Mammary epithelial cell (primary cell): ENCODE measurements at regions of chr22 and their contacts with region 1.

Region 1: DNA sequence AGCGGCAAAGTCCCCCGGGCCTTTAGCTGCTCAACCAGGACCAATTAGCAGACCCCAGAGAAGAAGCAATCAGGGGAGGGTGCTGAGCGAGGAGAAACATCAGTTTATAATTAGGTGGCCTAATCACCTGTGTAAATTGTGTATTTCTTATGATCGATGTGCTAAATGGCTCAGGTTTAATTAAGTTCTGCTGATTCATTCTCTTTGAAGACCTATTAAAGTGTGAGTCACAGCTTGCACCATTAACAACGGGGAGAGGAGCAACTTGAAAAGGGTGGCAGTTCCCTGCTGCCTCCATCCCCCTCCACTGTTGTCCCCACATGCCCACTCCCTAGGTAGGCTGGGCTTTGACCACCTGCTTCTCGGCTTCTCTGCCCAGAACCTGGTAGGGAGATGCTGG is 10.7 kb downstream of the ISX start:
- DNase-seq: peak; percentile 24
- H3K4me3 ChIP-seq: no peak overlapping the region
- H3K27ac ChIP-seq: no peak overlapping the region
- H3K4me1 ChIP-seq: no peaks in the 10 kb centered on the region
- H3K27me3 ChIP-seq: no peaks in the 10 kb centered on the region
- CTCF ChIP-seq: no peak

Region 2: GRCh38 chr22:35043252-35043931 is 33.2 kb before region 1 on chr22:
- CTCF ChIA-PET with region 1: no interaction called
- dilution Hi-C with region 1: no loop called
- in situ Hi-C with region 1: no loop called
- intact Hi-C with region 1: no loop called
- DNase-seq: no peak
- H3K4me3 ChIP-seq: no peak overlapping the region
- H3K27ac ChIP-seq: no peak overlapping the region
- H3K4me1 ChIP-seq: no peaks in the 10 kb centered on the region
- H3K27me3 ChIP-seq: no peaks in the 10 kb centered on the region
- CTCF ChIP-seq: no peak

Region 3: GRCh38 chr22:35114131-35114980 is 37.7 kb after region 1 on chr22:
- CTCF ChIA-PET with region 1: no interaction called
- dilution Hi-C with region 1: loop called (anchors 5 kb)
- in situ Hi-C with region 1: no loop called
- intact Hi-C with region 1: no loop called
- DNase-seq: no peak
- H3K4me3 ChIP-seq: no peak overlapping the region
- H3K27ac ChIP-seq: no peak overlapping the region
- H3K4me1 ChIP-seq: no peaks in the 10 kb centered on the region
- H3K27me3 ChIP-seq: no peaks in the 10 kb centered on the region
- CTCF ChIP-seq: no peak